CD4-positive, alpha-beta T cell (primary cell): ENCODE measurements at regions of chr11 and their contacts with region 1.

Region 1: GRCh38 chr11:67353317-67354074 is at the start of gene POLD4:
- DNase-seq: peak; percentile 90 to 98 (median 96)
- ATAC-seq: peak; percentile 84
- H3K4me3 ChIP-seq: peak within 1 kb of the TSS; percentile 78
- H3K4me3 Mint-ChIP-seq: peak within 1 kb of the TSS; percentile 98
- H3K27ac ChIP-seq: peak within 1 kb of the TSS; percentile 94 to 100
- H3K27ac Mint-ChIP-seq: peak within 1 kb of the TSS; percentile 99
- H3K4me1 ChIP-seq: peaks cover 67% of the 10 kb centered on the region
- H3K4me1 Mint-ChIP-seq: peaks cover 59% of the 10 kb centered on the region
- H3K27me3 ChIP-seq: no peaks in the 10 kb centered on the region
- H3K27me3 Mint-ChIP-seq: no peaks in the 10 kb centered on the region
- CTCF ChIP-seq: no peak
- total RNA-seq, gene POLD4: 31.7 to 39.5 TPM

Region 2: GRCh38 chr11:67239783-67240575 is 113.5 kb before region 1 on chr11:
- CTCF ChIA-PET with region 1: interaction called, 5 read pairs
- POLR2A ChIA-PET with region 1: interaction called, 38 read pairs
- intact Hi-C with region 1: no loop called
- DNase-seq: peak; percentile 91 to 99 (median 95)
- ATAC-seq: peak; percentile 88
- H3K4me3 ChIP-seq: peak overlapping the region; percentile 97
- H3K4me3 Mint-ChIP-seq: peak overlapping the region; percentile 100
- H3K27ac ChIP-seq: peak overlapping the region; percentile 97 to 98
- H3K27ac Mint-ChIP-seq: peak overlapping the region; percentile 98
- H3K4me1 ChIP-seq: peaks cover 46% of the 10 kb centered on the region
- H3K4me1 Mint-ChIP-seq: peaks cover 61% of the 10 kb centered on the region
- H3K27me3 ChIP-seq: no peaks in the 10 kb centered on the region
- H3K27me3 Mint-ChIP-seq: no peaks in the 10 kb centered on the region
- CTCF ChIP-seq: no peak

Region 3: GRCh38 chr11:67317205-67317887 is 36.1 kb before region 1 on chr11:
- CTCF ChIA-PET with region 1: interaction called, 20 read pairs
- POLR2A ChIA-PET with region 1: interaction called, 21 read pairs
- intact Hi-C with region 1: loop called in 1 of 2 experiments (anchors 2 kb)
- DNase-seq: peak; percentile 96 to 99 (median 98)
- ATAC-seq: peak; percentile 78
- H3K4me3 ChIP-seq: peak overlapping the region; percentile 82
- H3K4me3 Mint-ChIP-seq: peak overlapping the region; percentile 99
- H3K27ac ChIP-seq: peak overlapping the region; percentile 46 to 70
- H3K27ac Mint-ChIP-seq: peak overlapping the region; percentile 85
- H3K4me1 ChIP-seq: peaks cover 42% of the 10 kb centered on the region
- H3K4me1 Mint-ChIP-seq: peaks cover 54% of the 10 kb centered on the region
- H3K27me3 ChIP-seq: no peaks in the 10 kb centered on the region
- H3K27me3 Mint-ChIP-seq: no peaks in the 10 kb centered on the region
- CTCF ChIP-seq: peak; percentile 88

Region 4: GRCh38 chr11:67391304-67392132 is 38.0 kb after region 1 on chr11 and contains the start of gene RAD9A:
- CTCF ChIA-PET with region 1: interaction called, 10 read pairs
- POLR2A ChIA-PET with region 1: interaction called, 29 read pairs
- intact Hi-C with region 1: no loop called
- DNase-seq: peak; percentile 82 to 97 (median 90)
- ATAC-seq: peak; percentile 83
- H3K4me3 ChIP-seq: peak within 1 kb of the TSS; percentile 90
- H3K4me3 Mint-ChIP-seq: peak within 1 kb of the TSS; percentile 88
- H3K27ac ChIP-seq: peak within 1 kb of the TSS; percentile 55 to 77
- H3K27ac Mint-ChIP-seq: peak within 1 kb of the TSS; percentile 76
- H3K4me1 ChIP-seq: peaks cover 42% of the 10 kb centered on the region
- H3K4me1 Mint-ChIP-seq: peaks cover 38% of the 10 kb centered on the region
- H3K27me3 ChIP-seq: no peaks in the 10 kb centered on the region
- H3K27me3 Mint-ChIP-seq: no peaks in the 10 kb centered on the region
- CTCF ChIP-seq: no peak
- total RNA-seq, gene RAD9A: 19.3 to 20.3 TPM

Region 5: DNA sequence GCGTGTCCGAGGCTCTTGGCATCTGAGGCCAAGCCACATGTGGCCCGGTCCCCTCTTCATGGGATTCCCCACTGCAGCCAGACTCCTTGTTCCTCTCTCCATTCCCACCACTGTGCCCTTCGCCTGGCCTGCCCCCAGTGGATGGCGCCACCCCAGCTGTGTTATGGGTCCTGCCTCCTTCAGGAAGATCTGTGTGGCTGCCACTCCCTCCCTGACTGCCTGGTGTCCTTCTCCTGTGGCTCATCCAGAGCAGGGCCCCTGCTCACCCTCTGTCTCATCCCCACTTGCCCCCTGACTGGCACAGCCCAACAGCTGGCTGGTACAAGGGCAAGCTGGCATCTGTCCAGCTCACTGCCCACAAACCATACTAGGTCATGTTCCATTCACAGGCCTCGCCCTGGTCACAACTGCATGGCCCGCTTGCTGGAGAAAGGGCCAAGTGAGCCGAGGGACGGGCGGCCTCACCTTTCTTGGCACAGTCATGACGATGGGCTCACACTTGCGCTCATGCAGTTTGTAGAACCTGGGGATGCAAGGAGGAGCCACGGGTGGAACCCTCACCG is 85.9 kb after region 1 on chr11:
- CTCF ChIA-PET with region 1: interaction called, 4 read pairs
- POLR2A ChIA-PET with region 1: interaction called, 12 read pairs
- intact Hi-C with region 1: no loop called
- DNase-seq: peak in 5 of 14 experiments; percentile 23 to 64 (median 48)
- ATAC-seq: no peak
- H3K4me3 ChIP-seq: peak overlapping the region; percentile 97
- H3K4me3 Mint-ChIP-seq: peak overlapping the region; percentile 98
- H3K27ac ChIP-seq: peak overlapping the region; percentile 72 to 94
- H3K27ac Mint-ChIP-seq: peak overlapping the region; percentile 98
- H3K4me1 ChIP-seq: peaks cover 79% of the 10 kb centered on the region
- H3K4me1 Mint-ChIP-seq: peaks cover 63% of the 10 kb centered on the region
- H3K27me3 ChIP-seq: no peaks in the 10 kb centered on the region
- H3K27me3 Mint-ChIP-seq: no peaks in the 10 kb centered on the region
- CTCF ChIP-seq: no peak

Region 6: DNA sequence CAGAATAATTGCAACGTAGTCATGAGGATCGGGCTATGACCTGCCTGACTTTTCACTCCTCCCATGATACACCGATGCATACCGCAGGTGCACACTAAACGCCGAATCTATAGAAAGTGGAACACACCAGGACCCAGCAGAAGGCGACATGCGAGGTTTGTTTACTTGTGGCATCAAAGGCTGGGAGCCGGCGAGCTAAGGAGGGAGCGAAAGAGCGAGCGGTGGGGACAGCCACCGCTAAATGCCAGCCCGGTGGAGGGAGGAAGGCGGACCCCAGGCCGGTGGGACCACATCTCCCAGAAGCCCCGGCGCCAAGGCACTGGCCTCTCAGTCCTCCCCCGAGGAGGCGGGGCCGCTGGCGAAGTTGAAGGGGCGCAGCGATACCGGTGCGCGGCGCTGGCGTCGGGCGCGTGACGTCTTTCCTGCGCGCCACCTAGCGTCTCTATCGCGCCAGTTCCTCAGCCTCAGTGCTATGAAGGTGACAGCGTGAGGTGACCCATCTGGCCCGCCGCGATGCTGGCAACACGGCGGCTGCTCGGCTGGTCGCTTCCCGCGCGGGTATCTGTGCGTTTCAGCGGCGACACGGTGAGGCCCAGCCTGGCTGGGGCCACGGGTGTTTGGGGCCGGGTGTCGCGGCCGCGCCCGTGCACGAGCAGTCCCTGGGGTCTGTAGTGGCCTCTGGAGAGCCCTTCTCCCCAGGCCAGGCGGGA is 253.2 kb after region 1 on chr11 and contains the start of gene NDUFV1:
- CTCF ChIA-PET with region 1: no interaction called
- POLR2A ChIA-PET with region 1: no interaction called
- intact Hi-C with region 1: loop called in 1 of 2 experiments (anchors 5 kb)
- DNase-seq: peak; percentile 93 to 98 (median 96)
- ATAC-seq: peak; percentile 98
- H3K4me3 ChIP-seq: peak within 1 kb of the TSS; percentile 83
- H3K4me3 Mint-ChIP-seq: peak within 1 kb of the TSS; percentile 88
- H3K27ac ChIP-seq: peak within 1 kb of the TSS; percentile 64 to 79
- H3K27ac Mint-ChIP-seq: peak within 1 kb of the TSS; percentile 70
- H3K4me1 ChIP-seq: peaks cover 23% of the 10 kb centered on the region
- H3K4me1 Mint-ChIP-seq: peaks cover 9% of the 10 kb centered on the region
- H3K27me3 ChIP-seq: peaks cover 0 to 3% of the 10 kb centered on the region in 2 experiments
- H3K27me3 Mint-ChIP-seq: peaks cover 11% of the 10 kb centered on the region
- CTCF ChIP-seq: peak; percentile 81
- total RNA-seq, gene NDUFV1: 223 to 224 TPM